Endothelial cell of umbilical vein (primary cell): ENCODE measurements at regions of chr13 and their contacts with region 1.

Region 1: DNA sequence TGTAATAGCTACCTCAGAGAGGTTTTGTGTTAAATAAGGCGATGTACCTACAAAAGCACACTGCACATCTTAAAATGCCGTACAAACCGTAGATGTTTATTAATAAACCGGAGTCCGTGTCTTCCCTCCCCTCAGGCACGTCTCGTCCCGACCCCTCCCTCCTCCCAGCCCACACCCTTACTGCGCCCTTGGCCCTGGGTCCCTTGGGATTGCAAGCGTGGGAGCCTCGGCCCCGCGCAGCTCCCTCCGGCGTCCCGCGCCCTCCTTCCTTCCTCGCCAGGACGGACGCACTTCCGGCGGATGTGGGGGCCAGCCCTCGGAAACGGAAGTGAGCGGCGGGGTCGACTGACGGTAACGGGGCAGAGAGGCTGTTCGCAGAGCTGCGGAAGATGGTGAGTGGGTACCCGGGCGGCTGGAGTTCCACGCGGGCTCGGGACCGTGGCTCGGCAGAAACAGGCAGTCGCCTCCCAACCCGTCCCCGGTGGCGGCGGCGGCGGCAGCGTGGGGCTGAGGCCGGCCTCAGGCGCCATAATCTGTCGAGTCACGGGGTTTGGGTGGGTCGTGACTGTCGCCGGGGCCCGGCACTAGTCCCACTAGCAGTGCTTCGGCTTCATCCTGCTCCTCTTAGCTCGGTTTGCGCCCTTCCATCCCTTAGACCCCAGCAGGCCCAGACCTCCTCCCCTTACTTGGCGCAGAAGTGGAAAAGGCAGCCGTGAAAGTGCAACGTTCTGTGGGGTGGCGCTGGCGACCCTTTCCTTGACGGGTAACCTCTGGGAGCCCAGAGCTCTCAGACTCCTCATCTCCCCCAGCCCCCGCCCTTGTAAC is at the start of gene POMP:
- DNase-seq: peak; percentile 91
- H3K4me3 ChIP-seq: peak within 1 kb of the TSS; percentile 90 to 96 (median 96)
- H3K27ac ChIP-seq: peak within 1 kb of the TSS; percentile 99
- H3K4me1 ChIP-seq: peaks cover 20% of the 10 kb centered on the region
- H3K27me3 ChIP-seq: no peaks in the 10 kb centered on the region
- CTCF ChIP-seq: no peak
- POLR2A ChIP-seq: peak; percentile 43
- total RNA-seq, gene POMP: 88.9 and 105 TPM in 2 replicates

Region 2: DNA sequence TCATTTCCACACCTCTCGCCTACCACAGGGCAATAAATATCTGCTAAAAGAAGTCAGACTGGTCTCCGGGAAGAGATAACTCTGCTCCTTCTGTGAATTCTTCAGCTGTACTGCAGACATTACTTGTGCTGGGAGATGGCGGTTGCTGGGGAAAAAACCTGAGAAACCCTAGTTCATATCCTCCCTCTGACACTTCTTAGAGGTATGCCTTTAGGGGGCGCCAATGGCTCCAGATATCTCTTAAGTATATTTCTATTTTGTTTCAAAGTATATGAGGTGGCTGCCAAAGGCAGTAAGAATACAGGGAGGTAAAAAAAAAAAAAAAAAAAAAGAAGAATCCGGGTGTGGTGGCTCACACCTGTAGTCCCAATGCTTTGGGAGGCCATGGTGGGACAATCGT is 345.4 kb before region 1 on chr13:
- CTCF ChIA-PET with region 1: interaction called, 9 read pairs
- POLR2A ChIA-PET with region 1: no interaction called
- dilution Hi-C with region 1: no loop called
- intact Hi-C with region 1: loop called (anchors 2 kb)
- DNase-seq: peak; percentile 66
- H3K4me3 ChIP-seq: no peak overlapping the region
- H3K27ac ChIP-seq: no peak overlapping the region
- H3K4me1 ChIP-seq: no peaks in the 10 kb centered on the region
- H3K27me3 ChIP-seq: no peaks in the 10 kb centered on the region
- CTCF ChIP-seq: peak; percentile 44 to 48
- POLR2A ChIP-seq: no peak

Region 3: DNA sequence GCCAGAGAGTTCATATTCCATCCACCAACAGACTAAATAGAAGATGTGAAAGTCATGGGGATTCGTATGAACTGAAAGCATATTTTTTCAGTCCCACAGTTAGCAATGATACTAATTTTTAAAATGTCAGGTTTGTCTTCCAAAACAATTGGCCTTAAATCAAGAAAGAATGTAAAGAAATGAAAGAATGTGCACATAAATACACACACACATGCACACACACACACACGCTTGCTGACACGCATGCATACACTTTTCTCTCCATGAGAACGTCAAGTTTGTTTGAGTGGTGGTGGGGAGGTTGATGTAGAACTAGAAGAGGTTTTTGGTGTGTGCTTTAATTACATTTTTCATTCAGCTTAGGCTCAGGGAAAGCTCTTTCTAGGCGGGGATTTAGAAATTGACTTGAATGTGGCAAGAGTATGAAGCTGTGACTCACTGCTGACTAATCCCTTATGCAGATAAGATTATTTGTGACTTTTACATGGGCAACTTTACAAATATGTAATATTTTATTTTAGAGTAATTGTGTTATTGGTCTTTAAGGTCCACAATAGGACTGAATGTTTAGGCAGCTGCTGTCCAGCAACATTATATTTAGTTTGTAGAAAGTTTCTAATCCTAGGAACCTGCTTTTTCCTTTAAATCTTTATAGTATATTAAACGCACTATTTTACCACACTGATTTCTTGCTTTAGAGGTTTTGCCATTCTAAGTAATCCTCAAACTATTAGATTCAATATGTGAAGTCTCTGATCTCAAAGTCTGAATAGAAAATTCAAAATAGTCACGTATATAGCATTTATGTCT is 182.9 kb before region 1 on chr13:
- CTCF ChIA-PET with region 1: no interaction called
- POLR2A ChIA-PET with region 1: no interaction called
- dilution Hi-C with region 1: no loop called
- intact Hi-C with region 1: loop called (anchors 5 kb)
- DNase-seq: peak; percentile 86
- H3K4me3 ChIP-seq: no peak overlapping the region
- H3K27ac ChIP-seq: peak overlapping the region; percentile 59
- H3K4me1 ChIP-seq: peaks cover 61% of the 10 kb centered on the region
- H3K27me3 ChIP-seq: no peaks in the 10 kb centered on the region
- CTCF ChIP-seq: no peak
- POLR2A ChIP-seq: no peak

Region 4: DNA sequence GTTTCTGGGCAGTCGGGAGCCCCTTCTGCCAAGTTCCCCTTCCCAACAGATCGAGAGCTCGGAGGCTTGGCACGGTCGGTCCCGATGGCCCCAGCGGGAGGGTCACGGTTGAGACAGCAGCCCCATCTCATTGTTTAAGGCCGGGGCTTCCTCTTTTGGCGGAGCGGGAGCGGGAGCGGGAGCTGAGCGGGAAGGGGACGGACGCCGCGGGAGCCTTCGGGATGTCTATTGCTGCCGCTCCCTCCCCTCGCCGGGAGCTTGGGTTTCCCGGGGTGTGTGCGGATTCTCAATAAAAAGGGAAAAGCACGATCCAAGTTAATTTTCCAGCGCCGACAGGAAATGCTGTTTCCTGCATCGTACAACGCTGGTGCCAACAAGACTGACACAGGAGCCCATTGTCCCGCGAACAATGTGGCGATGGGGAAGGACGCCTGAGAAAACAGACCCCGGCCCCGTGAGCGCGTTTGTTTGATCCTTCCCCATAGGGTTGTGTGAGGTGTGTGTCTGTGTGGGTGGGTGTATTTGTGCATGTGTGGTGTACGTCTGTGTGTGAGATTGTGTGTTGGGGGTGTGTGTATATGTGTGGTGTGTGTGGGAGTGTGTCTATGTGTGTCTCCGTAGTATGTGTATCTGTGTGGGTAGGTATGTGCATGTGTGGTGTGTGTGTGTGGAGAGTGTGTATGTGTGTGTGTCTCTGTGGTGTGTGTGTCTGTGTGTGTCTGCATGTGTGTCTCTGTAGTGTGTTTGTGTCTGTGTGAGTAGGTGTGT is 127.7 kb before region 1 on chr13:
- CTCF ChIA-PET with region 1: no interaction called
- POLR2A ChIA-PET with region 1: no interaction called
- dilution Hi-C with region 1: no loop called
- intact Hi-C with region 1: loop called (anchors 2 kb)
- DNase-seq: peak; percentile 85
- H3K4me3 ChIP-seq: peak overlapping the region in 2 of 3 experiments; percentile 45
- H3K27ac ChIP-seq: peak overlapping the region; percentile 36
- H3K4me1 ChIP-seq: peaks cover 14% of the 10 kb centered on the region
- H3K27me3 ChIP-seq: no peaks in the 10 kb centered on the region
- CTCF ChIP-seq: no peak
- POLR2A ChIP-seq: no peak